Ascending aorta (tissue), 2 donors: ENCODE measurements at regions of chr3 and their contacts with region 1.

Region 1: GRCh38 chr3:156674046-156674910 is at the start of gene TIPARP:
- DNase-seq: peak; percentile 97 to 100
- H3K4me3 ChIP-seq: peak within 1 kb of the TSS; percentile 70 to 92
- H3K27ac ChIP-seq: peak within 1 kb of the TSS; percentile 93 to 96
- H3K4me1 ChIP-seq: peaks cover 0 to 11% of the 10 kb centered on the region in 2 donors
- H3K27me3 ChIP-seq: no peaks in the 10 kb centered on the region
- CTCF ChIP-seq: peak; percentile 71 to 85 (median 73)
- total RNA-seq, gene TIPARP: 7.2 TPM

Region 2: DNA sequence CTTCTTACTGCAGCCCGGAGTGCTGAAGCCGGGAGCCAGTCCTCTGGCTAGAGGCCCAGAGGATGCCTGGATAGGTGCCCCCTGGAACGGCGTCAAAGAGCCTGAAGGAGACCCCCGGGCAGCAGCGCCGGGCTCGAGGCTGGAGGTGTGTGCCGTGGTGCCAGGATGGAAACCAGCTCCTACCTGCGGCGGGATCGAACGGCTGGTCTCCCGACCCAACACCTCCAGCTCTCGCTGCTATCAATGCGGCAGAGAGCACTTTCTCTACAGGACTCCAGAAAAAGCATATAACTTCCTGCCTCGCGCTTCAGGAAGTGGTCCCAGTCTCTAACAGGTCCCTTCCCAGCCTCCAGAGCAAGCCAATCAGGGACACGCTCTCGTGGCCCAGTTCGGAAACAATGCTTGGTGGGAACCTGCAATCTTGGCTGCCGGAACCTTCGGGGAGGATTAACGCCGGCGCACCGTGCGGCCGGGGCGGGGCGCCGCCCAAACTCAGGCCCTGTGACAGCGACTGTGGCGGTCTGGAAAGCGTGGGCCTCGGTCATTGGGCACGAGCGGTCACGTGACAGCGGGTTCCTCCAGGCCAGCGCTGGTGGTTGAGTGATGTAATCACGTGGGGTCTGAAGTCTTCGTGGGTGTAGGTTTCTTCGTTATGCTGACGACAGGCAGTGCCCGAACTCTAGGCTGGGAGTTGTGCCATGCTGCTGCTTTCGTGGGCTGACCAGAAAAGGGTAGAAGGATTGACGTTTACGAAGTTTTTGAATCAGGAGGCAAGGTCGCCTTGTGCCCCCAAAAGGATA is 819.9 kb before region 1 on chr3 and contains the start of gene SLC33A1:
- intact Hi-C with region 1: loop called (anchors 5 kb)
- DNase-seq: peak; percentile 97 to 100
- H3K4me3 ChIP-seq: peak within 1 kb of the TSS; percentile 84 to 89
- H3K27ac ChIP-seq: peak within 1 kb of the TSS; percentile 89 to 93
- H3K4me1 ChIP-seq: peaks cover 10 to 36% of the 10 kb centered on the region in 2 donors
- H3K27me3 ChIP-seq: no peaks in the 10 kb centered on the region
- CTCF ChIP-seq: no peak
- total RNA-seq, gene SLC33A1: 15.6 TPM

Region 3: DNA sequence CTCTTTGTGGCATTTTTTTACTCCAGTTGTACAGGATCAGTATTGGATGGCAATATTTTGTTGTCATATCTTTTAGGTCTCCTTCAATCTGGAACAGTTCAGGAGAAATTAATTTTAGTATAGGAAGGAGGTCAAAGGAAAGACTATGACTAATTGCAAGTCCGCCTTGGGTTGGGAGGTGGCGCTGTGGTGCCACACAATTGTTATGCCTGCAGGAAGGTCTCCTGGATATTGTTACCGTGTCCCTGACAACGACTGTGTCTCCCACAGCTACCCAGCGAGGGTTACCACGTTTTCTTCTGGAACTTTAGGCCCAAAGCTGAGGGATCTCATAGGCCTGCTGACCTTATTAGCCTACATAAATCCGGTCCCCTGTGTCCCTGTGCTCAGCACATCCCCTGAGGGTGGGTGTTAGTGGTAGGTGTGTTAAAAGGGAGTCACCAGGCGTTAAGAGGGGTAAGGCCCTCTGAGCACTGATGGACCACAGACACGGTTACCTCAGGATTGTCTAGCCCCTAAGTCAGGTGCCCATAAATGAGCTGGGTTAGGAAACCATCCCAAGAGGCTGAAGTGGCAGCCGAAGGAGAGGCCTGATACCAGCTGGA is 522.4 kb before region 1 on chr3:
- intact Hi-C with region 1: loop called (anchors 2 kb)
- DNase-seq: peak in 1 of 2 donors; percentile 87
- H3K4me3 ChIP-seq: no peak overlapping the region
- H3K27ac ChIP-seq: peak overlapping the region; percentile 27 to 45
- H3K4me1 ChIP-seq: peaks cover 11 to 22% of the 10 kb centered on the region in 2 donors
- H3K27me3 ChIP-seq: no peaks in the 10 kb centered on the region
- CTCF ChIP-seq: peak; percentile 70 to 85 (median 74)

Region 4: DNA sequence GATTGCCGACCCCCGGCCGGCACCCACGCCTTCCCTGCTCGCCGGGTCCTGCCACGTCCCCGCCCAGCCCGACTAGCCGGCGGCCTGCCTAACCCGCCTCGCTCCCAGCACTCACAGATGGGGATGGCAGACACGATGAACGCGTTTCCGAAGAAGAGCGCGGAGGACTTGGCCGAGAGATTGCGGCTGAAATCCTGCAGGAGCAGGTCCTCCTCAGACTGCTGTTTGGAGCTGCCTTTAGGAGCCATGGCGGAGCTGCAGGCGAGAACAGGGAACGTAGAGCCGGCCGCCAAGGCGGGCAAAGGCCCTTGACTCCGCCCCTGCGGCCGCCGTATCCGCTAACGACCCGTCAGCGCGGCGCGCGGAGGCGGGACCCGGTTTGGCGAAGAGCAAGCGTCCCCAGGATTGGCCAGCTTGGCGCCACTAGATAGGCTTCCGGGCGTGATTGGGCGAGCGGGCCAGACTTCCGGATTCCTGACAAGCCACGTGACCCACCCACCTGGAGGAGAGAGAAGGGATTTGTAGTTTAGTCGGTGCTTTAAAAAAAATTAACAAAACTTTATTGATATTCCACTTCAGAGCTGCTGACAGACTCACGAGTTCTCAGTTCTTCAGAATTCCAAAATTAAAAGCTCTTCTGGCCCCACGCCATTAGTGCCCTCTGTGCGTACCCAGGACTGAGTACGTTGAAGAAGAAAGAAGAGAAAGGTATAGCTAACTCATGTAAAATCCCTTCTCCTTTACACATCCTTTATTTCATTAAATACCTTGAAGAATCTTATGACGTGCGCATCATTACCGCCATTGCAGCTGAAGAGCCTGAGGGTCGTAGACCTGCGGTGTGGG is 119.2 kb before region 1 on chr3 and contains the start of gene SSR3:
- intact Hi-C with region 1: loop called (anchors 1 kb)
- DNase-seq: peak; percentile 98 to 100
- H3K4me3 ChIP-seq: peak within 1 kb of the TSS; percentile 84 to 95
- H3K27ac ChIP-seq: peak within 1 kb of the TSS; percentile 71 to 83
- H3K4me1 ChIP-seq: peaks cover 0 to 11% of the 10 kb centered on the region in 2 donors
- H3K27me3 ChIP-seq: no peaks in the 10 kb centered on the region
- CTCF ChIP-seq: peak in 1 of 3 experiments; percentile 54
- total RNA-seq, gene SSR3: 155 TPM

Region 5: DNA sequence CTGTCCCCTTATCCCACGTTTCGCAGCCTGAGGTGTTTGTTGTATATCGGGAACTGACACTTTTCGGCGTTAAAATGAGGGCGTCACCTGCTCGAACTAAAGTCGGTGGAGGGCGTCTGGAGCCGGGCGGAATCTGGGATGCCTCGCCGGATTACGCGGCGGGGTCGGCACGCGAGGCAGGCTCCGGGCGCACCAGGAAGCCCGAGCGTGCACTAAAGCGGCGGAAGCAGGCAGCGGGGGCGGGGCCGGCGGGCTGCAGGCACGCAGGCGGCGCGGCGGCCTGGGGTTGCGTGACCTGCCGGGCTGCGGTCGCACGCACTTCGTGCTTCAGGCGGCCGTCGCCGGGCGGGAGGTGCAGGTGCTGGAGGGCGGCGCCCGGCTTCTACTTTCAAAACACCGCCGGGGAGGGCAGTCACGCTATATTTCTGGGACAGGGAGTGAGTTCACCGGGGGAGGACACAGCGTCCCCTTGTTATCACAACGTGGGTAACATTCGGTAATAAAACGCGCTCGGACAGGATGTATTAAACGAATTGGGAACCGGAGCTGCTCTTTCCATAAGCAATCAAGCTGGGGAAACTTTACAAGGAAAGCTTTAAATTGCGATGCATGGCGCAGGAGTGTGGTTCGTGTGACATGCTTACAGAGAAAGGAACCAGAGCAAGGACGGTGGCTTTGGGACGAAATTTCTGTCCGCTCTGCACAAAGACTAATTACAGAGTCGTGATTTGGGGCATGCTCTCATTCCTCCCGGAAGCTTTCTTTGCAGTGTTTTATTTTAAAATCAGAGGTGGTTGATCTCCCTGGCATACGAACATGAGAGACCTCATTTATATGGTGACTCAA is 142.7 kb after region 1 on chr3:
- intact Hi-C with region 1: loop called (anchors 2 kb)
- DNase-seq: peak; percentile 20 to 90
- H3K4me3 ChIP-seq: peak overlapping the region; percentile 66 to 67
- H3K27ac ChIP-seq: peak overlapping the region; percentile 58 to 74
- H3K4me1 ChIP-seq: no peaks in the 10 kb centered on the region
- H3K27me3 ChIP-seq: no peaks in the 10 kb centered on the region
- CTCF ChIP-seq: peak in 1 of 3 experiments; percentile 16

Region 6: DNA sequence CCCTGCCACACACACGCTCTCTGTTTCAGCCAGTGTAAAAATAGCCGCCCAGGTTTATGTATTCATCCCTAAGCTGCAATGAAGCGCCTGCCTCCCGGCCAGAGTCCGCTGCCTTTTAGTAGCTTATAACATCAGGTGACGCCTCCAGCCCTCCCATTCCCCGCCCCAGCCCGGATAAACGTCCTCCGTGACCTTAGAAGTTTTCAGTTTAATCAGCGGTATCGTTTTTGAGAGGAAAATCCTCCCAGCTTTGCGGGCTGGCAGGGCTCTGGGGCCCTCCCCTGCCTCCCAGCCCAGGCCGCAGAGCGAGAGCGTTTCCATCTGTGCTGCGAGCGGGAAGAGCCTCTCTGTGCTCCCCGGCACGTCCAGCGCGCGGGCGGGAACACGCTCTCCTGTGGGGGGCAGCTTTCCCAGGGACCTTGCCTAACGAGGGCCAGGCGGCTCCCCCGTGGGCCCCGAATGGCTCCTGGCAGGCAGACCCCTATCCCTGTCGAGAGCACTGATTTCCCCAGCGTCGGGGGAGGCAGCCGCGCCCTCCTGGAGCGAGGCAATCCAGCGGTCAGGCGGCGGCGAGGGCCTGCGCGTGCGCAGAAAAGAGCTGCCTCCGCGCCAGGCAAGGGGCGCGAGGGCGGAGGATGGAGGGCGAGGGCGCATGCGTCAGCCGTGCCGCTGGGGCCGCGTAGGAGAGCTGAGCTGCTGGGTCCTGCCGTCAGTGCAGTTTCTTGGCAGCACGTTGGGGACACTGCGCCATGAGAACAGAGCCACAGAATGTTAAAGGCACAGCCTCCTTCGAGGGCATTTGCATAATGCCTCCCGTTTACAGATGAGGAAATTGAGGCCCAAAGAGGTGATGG is 414.6 kb after region 1 on chr3:
- intact Hi-C with region 1: loop called (anchors 1 kb)
- DNase-seq: peak; percentile 88 to 98
- H3K4me3 ChIP-seq: peak overlapping the region; percentile 74 to 75
- H3K27ac ChIP-seq: peak overlapping the region; percentile 97
- H3K4me1 ChIP-seq: peaks cover 12 to 31% of the 10 kb centered on the region in 2 donors
- H3K27me3 ChIP-seq: no peaks in the 10 kb centered on the region
- CTCF ChIP-seq: peak in 2 of 3 experiments; percentile 11 to 15

Region 7: GRCh38 chr3:157159762-157160657 is 485.7 kb after region 1 on chr3 and contains the start of gene CCNL1:
- intact Hi-C with region 1: loop called (anchors 1 kb)
- DNase-seq: peak; percentile 86 to 99
- H3K4me3 ChIP-seq: peak within 1 kb of the TSS; percentile 86 to 100
- H3K27ac ChIP-seq: peak within 1 kb of the TSS; percentile 99 to 100
- H3K4me1 ChIP-seq: peaks cover 6 to 38% of the 10 kb centered on the region in 2 donors
- H3K27me3 ChIP-seq: no peaks in the 10 kb centered on the region
- CTCF ChIP-seq: no peak
- total RNA-seq, gene CCNL1: 241 TPM